ENCODE measurements at regions of chr1 and their contacts with region 1.

Region 1: GRCh38 chr1:230149751-230150584 is 82.9 kb downstream of the GALNT2 start:
- DNase-seq: peak; percentile 82
- H3K4me3 ChIP-seq: peak overlapping the region; percentile 59
- H3K27ac ChIP-seq: peak overlapping the region; percentile 95
- H3K4me1 ChIP-seq: peaks cover 68% of the 10 kb centered on the region
- CTCF ChIP-seq: peak; percentile 41; the same call in 1 of the 2 replicates

Region 2: GRCh38 chr1:230130172-230130944 is 19.6 kb before region 1 on chr1:
- CTCF ChIA-PET with region 1: interaction called, 4 read pairs
- POLR2A ChIA-PET with region 1: interaction called, 65 read pairs
- intact Hi-C with region 1: no loop called
- DNase-seq: no peak
- H3K4me3 ChIP-seq: no peak overlapping the region
- H3K27ac ChIP-seq: no peak overlapping the region
- H3K4me1 ChIP-seq: peaks cover 81% of the 10 kb centered on the region
- CTCF ChIP-seq: no peak

Region 3: GRCh38 chr1:230136453-230137336 is 13.3 kb before region 1 on chr1:
- CTCF ChIA-PET with region 1: interaction called, 4 read pairs
- POLR2A ChIA-PET with region 1: interaction called, 65 read pairs
- intact Hi-C with region 1: no loop called
- DNase-seq: no peak
- H3K4me3 ChIP-seq: no peak overlapping the region
- H3K27ac ChIP-seq: no peak overlapping the region
- H3K4me1 ChIP-seq: peaks cover 64% of the 10 kb centered on the region
- CTCF ChIP-seq: no peak

Region 4: DNA sequence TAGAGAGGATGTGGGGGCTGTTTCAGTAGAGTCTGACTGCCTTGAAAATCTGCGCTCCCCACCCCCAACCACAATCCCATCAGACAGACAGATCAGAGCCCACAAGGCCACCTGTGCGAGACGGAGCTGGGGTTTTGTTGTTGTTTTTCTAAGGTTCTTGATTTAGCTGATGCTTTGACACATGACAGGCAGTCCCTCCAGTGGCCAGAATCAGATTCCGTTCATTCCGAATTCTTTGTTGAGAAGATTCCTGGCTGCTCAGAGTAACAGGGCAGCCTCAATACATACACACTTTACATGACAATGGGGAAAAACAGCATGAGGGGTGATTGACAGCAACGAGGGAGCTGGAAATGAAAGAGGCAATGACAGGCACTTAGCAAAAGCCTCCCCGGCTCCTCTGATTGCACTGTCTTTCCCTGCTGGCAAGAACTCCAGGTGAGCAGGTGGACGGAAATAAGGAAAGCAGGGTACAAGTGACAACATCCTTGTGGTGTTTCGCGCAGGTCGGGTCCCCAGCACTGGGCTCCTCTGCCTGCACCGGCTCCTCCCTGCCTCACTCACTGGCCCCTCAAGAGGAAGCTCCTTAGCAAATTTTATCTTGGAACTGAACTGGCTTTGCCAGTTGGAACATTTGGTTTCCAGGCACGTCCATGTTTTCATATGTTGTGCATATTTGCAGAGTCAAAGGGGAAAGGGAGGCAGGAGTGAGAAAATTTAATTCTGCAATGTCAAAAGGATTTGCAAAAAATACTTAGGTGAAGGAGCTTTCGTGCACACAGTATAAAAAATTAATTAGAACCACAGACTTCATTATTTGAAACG is 127.4 kb after region 1 on chr1:
- CTCF ChIA-PET with region 1: no interaction called
- POLR2A ChIA-PET with region 1: no interaction called
- intact Hi-C with region 1: no loop called
- DNase-seq: peak; percentile 73
- H3K4me3 ChIP-seq: no peak overlapping the region
- H3K27ac ChIP-seq: peak overlapping the region; percentile 47
- H3K4me1 ChIP-seq: peaks cover 39% of the 10 kb centered on the region
- CTCF ChIP-seq: peak; percentile 41